CD8-positive, alpha-beta T cell (primary cell): ENCODE measurements at regions of chr21 and their contacts with region 1.

Region 1: GRCh38 chr21:41879190-41879998 is at the start of gene PRDM15:
- DNase-seq: peak; percentile 55 to 89 (median 78)
- ATAC-seq: peak; percentile 68
- H3K4me3 ChIP-seq: peak within 1 kb of the TSS; percentile 69 to 89
- H3K4me3 Mint-ChIP-seq: peak within 1 kb of the TSS; percentile 90
- H3K27ac ChIP-seq: peak within 1 kb of the TSS; percentile 71 to 78
- H3K27ac Mint-ChIP-seq: peak within 1 kb of the TSS; percentile 93
- H3K4me1 ChIP-seq: peaks cover 14% of the 10 kb centered on the region
- H3K4me1 Mint-ChIP-seq: peaks cover 27% of the 10 kb centered on the region
- H3K27me3 ChIP-seq: no peaks in the 10 kb centered on the region
- H3K27me3 Mint-ChIP-seq: no peaks in the 10 kb centered on the region
- CTCF ChIP-seq: no peak
- total RNA-seq, gene PRDM15: 8.5 to 9.2 TPM

Region 2: GRCh38 chr21:41852929-41853320 is 26.5 kb before region 1 on chr21:
- CTCF ChIA-PET with region 1: no interaction called
- POLR2A ChIA-PET with region 1: no interaction called
- intact Hi-C with region 1: no loop called
- DNase-seq: no peak
- ATAC-seq: no peak
- H3K4me3 ChIP-seq: no peak overlapping the region
- H3K4me3 Mint-ChIP-seq: no peak overlapping the region
- H3K27ac ChIP-seq: no peak overlapping the region
- H3K27ac Mint-ChIP-seq: no peak overlapping the region
- H3K4me1 ChIP-seq: no peaks in the 10 kb centered on the region
- H3K4me1 Mint-ChIP-seq: no peaks in the 10 kb centered on the region
- H3K27me3 ChIP-seq: no peaks in the 10 kb centered on the region
- H3K27me3 Mint-ChIP-seq: no peaks in the 10 kb centered on the region
- CTCF ChIP-seq: no peak

Region 3: GRCh38 chr21:41895643-41896493 is 16.5 kb after region 1 on chr21:
- CTCF ChIA-PET with region 1: no interaction called
- POLR2A ChIA-PET with region 1: interaction called, 14 read pairs
- intact Hi-C with region 1: loop called in 1 of 2 experiments (anchors 1 kb)
- DNase-seq: peak; percentile 22 to 77 (median 61)
- ATAC-seq: peak; percentile 99
- H3K4me3 ChIP-seq: no peak overlapping the region
- H3K4me3 Mint-ChIP-seq: peak overlapping the region; percentile 57
- H3K27ac ChIP-seq: no peak overlapping the region
- H3K27ac Mint-ChIP-seq: peak overlapping the region; percentile 60
- H3K4me1 ChIP-seq: peaks cover 31% of the 10 kb centered on the region
- H3K4me1 Mint-ChIP-seq: peaks cover 17% of the 10 kb centered on the region
- H3K27me3 ChIP-seq: no peaks in the 10 kb centered on the region
- H3K27me3 Mint-ChIP-seq: no peaks in the 10 kb centered on the region
- CTCF ChIP-seq: no peak

Region 4: DNA sequence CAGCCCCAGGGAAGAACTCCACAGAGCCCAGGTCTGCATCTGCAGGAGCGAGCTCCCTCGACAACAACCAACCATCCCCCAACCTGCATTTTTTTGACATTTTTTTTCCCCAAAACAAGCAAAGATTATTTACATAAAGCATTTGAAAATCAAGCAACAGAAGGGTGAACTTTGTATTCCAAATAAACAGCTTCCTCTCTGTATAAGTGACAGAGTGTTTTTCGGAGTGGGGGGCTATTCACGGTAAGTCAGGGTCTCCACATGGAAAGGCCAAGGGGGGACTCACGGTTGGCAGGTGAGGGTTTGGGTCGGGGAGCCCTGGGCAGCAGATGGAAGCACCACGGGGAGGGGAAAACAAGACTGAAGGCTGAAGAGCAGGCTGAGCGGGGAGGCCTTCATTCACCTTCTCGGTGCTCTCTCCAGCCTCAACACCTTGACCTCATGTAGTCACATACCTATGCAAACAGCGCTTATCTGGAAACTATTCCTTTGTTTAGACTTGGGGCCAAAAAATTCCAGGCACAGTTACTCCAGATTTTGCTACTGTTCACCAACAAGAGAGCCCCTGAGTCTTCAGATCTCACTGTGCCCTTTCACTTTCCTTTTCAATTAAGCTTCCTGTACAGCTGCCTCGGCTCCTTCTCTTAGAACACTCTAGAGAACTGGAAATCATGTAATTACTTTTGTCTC is 46.9 kb after region 1 on chr21:
- CTCF ChIA-PET with region 1: interaction called, 4 read pairs
- POLR2A ChIA-PET with region 1: interaction called, 18 read pairs
- intact Hi-C with region 1: loop called (anchors 1 kb)
- DNase-seq: peak in 8 of 9 experiments; percentile 14 to 81 (median 32)
- ATAC-seq: peak; percentile 91
- H3K4me3 ChIP-seq: peak overlapping the region; percentile 53 to 64
- H3K4me3 Mint-ChIP-seq: peak overlapping the region; percentile 96
- H3K27ac ChIP-seq: peak overlapping the region; percentile 72 to 89
- H3K27ac Mint-ChIP-seq: peak overlapping the region; percentile 99
- H3K4me1 ChIP-seq: peaks cover 42% of the 10 kb centered on the region
- H3K4me1 Mint-ChIP-seq: peaks cover 55% of the 10 kb centered on the region
- H3K27me3 ChIP-seq: no peaks in the 10 kb centered on the region
- H3K27me3 Mint-ChIP-seq: no peaks in the 10 kb centered on the region
- CTCF ChIP-seq: no peak

Region 5: GRCh38 chr21:42002421-42002958 is 123.1 kb after region 1 on chr21:
- CTCF ChIA-PET with region 1: no interaction called
- POLR2A ChIA-PET with region 1: no interaction called
- intact Hi-C with region 1: no loop called
- DNase-seq: peak in 7 of 9 experiments; percentile 15 to 54 (median 30)
- ATAC-seq: peak; percentile 68
- H3K4me3 ChIP-seq: no peak overlapping the region
- H3K4me3 Mint-ChIP-seq: peak overlapping the region; percentile 1
- H3K27ac ChIP-seq: no peak overlapping the region
- H3K27ac Mint-ChIP-seq: no peak overlapping the region
- H3K4me1 ChIP-seq: no peaks in the 10 kb centered on the region
- H3K4me1 Mint-ChIP-seq: peaks cover 28% of the 10 kb centered on the region
- H3K27me3 ChIP-seq: no peaks in the 10 kb centered on the region
- H3K27me3 Mint-ChIP-seq: no peaks in the 10 kb centered on the region
- CTCF ChIP-seq: no peak